ENCODE measurements at regions of chr1 and their contacts with region 1.

Region 1: GRCh38 chr1:243343970-243344937 is 88.4 kb downstream of the SDCCAG8 start:
- H3K4me3 Mint-ChIP-seq: no peak overlapping the region
- H3K27ac Mint-ChIP-seq: no peak overlapping the region
- H3K4me1 Mint-ChIP-seq: peaks cover 5% of the 10 kb centered on the region
- H3K27me3 Mint-ChIP-seq: no peaks in the 10 kb centered on the region

Region 2: DNA sequence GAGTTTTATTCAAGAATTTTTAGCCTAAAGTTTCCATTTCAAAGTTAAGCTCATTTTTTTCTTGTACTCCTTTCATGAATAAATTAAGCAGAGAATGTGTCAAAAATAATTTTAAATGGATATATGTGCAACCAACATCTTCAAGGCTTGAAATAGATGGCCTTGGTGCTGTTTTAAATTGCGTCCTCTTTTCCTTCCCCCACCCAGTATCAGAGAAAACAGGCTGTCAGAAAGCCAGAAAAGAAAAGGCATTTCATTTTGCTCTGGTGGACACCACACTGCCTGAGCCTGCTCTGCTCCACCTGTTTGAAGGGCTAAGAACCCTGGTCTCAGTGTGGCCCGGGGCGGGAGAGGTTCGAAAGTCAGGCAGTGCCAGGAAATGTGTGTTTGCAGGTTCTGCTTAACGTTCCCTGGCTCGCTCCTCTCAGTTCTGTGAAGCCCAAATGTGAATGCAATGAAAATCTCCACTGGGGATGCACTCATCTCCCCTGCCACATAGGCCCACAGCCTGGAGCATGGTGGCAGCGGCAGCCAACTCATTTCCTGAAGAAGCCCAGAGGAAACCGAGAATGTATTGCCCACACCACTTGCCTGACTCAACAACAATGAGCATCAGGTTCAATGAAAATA is 46.0 kb after region 1 on chr1:
- intact Hi-C with region 1: no loop called
- H3K4me3 Mint-ChIP-seq: no peak overlapping the region
- H3K27ac Mint-ChIP-seq: no peak overlapping the region
- H3K4me1 Mint-ChIP-seq: peaks cover 11% of the 10 kb centered on the region
- H3K27me3 Mint-ChIP-seq: no peaks in the 10 kb centered on the region

Region 3: GRCh38 chr1:243587823-243588560 is 243.7 kb after region 1 on chr1:
- intact Hi-C with region 1: no loop called
- H3K4me3 Mint-ChIP-seq: no peak overlapping the region
- H3K27ac Mint-ChIP-seq: no peak overlapping the region
- H3K4me1 Mint-ChIP-seq: no peaks in the 10 kb centered on the region
- H3K27me3 Mint-ChIP-seq: no peaks in the 10 kb centered on the region

Region 4: GRCh38 chr1:243748706-243749283 is 404.5 kb after region 1 on chr1:
- intact Hi-C with region 1: loop called (anchors 1 kb)
- H3K4me3 Mint-ChIP-seq: no peak overlapping the region
- H3K27ac Mint-ChIP-seq: no peak overlapping the region
- H3K4me1 Mint-ChIP-seq: peaks cover 6% of the 10 kb centered on the region
- H3K27me3 Mint-ChIP-seq: no peaks in the 10 kb centered on the region

Region 5: GRCh38 chr1:243946946-243947345 is 602.7 kb after region 1 on chr1:
- intact Hi-C with region 1: loop called (anchors 10 kb)
- H3K4me3 Mint-ChIP-seq: no peak overlapping the region
- H3K27ac Mint-ChIP-seq: no peak overlapping the region
- H3K4me1 Mint-ChIP-seq: no peaks in the 10 kb centered on the region
- H3K27me3 Mint-ChIP-seq: no peaks in the 10 kb centered on the region